Activated CD8-positive, alpha-beta T cell treated with anti-CD3 and anti-CD28 coated beads for 36 hours (primary cell): ENCODE measurements at regions of chr16 and their contacts with region 1.

Region 1: DNA sequence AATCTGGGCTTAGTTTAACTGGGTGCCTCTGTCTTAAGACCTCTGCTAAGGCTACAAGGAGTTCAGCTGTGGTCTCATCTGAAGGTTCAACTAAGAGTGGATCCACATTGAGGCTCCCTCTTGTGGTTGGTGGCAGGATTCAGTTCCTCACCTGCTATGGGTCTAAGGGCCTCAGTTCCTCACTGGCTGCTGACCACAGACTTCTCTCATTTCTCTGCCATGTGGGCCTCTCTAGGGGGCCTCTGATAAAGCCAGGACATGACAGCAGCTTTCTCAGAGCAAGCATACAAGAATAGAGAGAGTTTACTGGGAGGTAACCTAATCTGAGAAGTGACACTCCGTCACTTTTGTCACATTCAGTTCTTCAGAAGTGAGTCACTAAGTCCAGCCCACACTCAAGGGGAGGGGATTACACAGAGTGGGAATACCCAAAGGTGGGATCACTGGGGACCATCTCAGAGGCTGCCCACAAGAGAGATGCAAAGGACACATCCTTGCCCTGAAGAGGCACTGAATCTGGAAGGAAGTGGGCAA is 19.2 kb upstream of the ABAT start:
- DNase-seq: peak; percentile 65
- ATAC-seq: peak; percentile 87
- H3K4me3 Mint-ChIP-seq: no peak overlapping the region
- H3K27ac Mint-ChIP-seq: no peak overlapping the region
- H3K4me1 Mint-ChIP-seq: peaks cover 13% of the 10 kb centered on the region
- H3K27me3 Mint-ChIP-seq: no peaks in the 10 kb centered on the region
- CTCF ChIP-seq: peak; percentile 33

Region 2: GRCh38 chr16:8567750-8568617 is 87.3 kb before region 1 on chr16:
- CTCF ChIA-PET with region 1: interaction called, 5 read pairs
- POLR2A ChIA-PET with region 1: no interaction called
- intact Hi-C with region 1: loop called (anchors 5 kb)
- DNase-seq: peak; percentile 85
- ATAC-seq: peak; percentile 90
- H3K4me3 Mint-ChIP-seq: no peak overlapping the region
- H3K27ac Mint-ChIP-seq: no peak overlapping the region
- H3K4me1 Mint-ChIP-seq: peaks cover 2% of the 10 kb centered on the region
- H3K27me3 Mint-ChIP-seq: peaks cover 7% of the 10 kb centered on the region
- CTCF ChIP-seq: peak; percentile 96

Region 3: DNA sequence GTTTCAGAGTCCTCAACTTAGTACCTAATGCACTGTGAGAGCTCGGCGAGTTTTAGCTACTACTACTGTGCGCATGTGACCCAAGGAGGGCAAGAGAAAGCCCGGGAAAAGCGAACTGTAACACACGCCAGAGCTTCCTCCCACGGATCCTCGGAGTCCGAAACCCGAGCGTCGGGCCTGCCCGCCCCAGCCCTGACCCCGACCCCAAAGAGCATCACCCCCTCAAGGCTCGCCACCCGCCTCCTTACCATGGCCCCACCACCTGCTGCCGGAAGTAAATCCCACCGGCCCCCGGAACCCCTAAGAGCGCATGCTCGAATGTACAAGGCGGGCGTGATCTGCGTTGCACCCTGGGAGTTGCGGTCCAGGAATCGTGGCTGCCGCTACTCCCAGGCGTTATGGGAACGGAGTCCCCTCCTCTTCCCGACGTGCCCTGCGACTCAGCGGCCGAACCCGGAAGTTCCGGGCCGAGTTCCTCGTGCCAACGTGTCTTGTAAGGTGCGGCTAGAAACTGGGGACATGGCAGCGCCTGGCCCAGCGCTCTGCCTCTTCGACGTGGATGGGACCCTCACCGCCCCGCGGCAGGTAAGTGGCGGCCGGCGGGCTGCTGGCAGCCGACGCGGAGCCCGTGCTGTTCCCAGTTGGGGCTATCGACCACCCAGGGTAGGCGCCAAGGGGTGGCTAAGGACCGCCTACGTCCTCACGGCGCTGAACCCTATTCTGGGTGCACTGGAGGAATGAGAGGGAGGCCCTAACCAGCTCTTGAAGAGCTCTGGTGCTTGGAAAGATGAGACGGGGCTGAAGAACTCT is 142.3 kb after region 1 on chr16 and contains the starts of genes PMM2 and TMEM186:
- CTCF ChIA-PET with region 1: interaction called, 5 read pairs
- POLR2A ChIA-PET with region 1: interaction called, 3 read pairs
- intact Hi-C with region 1: loop called (anchors 5 kb)
- DNase-seq: peak; percentile 98
- ATAC-seq: peak; percentile 95
- H3K4me3 Mint-ChIP-seq: peak within 1 kb of the TSS; percentile 87
- H3K27ac Mint-ChIP-seq: peak within 1 kb of the TSS; percentile 96
- H3K4me1 Mint-ChIP-seq: peaks cover 40% of the 10 kb centered on the region
- H3K27me3 Mint-ChIP-seq: no peaks in the 10 kb centered on the region
- CTCF ChIP-seq: no peak
- total RNA-seq, gene PMM2: 32.7 to 34.3 TPM
- total RNA-seq, gene TMEM186: 15.3 to 15.4 TPM

Region 4: GRCh38 chr16:8919934-8920462 is 264.7 kb after region 1 on chr16:
- CTCF ChIA-PET with region 1: no interaction called
- POLR2A ChIA-PET with region 1: no interaction called
- intact Hi-C with region 1: no loop called
- DNase-seq: no peak
- ATAC-seq: peak; percentile 30
- H3K4me3 Mint-ChIP-seq: no peak overlapping the region
- H3K27ac Mint-ChIP-seq: peak overlapping the region; percentile 75
- H3K4me1 Mint-ChIP-seq: peaks cover 61% of the 10 kb centered on the region
- H3K27me3 Mint-ChIP-seq: no peaks in the 10 kb centered on the region
- CTCF ChIP-seq: no peak